Aorta (tissue), 5 donors: ENCODE measurements at regions of chr6 and their contacts with region 1.

Region 1: DNA sequence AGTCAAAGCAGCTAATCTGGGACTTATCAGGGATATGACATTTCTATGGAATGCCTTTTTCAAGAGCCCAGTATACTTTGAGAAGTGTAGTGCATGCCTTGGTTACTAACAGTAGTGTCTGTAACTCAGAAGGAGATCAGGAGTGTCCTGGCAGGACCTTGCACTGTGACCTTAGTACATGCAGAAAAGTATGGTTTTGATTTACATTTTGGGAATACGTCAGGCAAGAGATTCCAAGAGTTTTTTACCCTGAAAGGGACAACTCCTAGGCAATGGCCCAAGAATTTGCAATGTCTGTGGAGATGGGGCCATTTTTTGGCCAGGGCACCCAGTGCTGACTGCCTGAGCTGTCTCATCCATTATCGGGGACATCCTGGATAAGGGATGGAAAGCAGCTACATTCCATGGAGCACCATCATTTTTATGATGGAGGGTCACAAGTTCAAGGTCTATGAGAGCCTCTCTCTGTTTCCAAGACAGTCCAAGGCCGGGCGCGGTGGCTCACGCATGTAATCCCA is 80.2 kb downstream of the FAM50B start:
- DNase-seq: peak; percentile 61 to 85
- ATAC-seq: peak; percentile 60
- H3K4me3 ChIP-seq: no peak overlapping the region
- H3K27ac ChIP-seq: peak overlapping the region; percentile 3 to 9
- H3K4me1 ChIP-seq: no peaks in the 10 kb centered on the region
- H3K27me3 ChIP-seq: no peaks in the 10 kb centered on the region

Region 2: DNA sequence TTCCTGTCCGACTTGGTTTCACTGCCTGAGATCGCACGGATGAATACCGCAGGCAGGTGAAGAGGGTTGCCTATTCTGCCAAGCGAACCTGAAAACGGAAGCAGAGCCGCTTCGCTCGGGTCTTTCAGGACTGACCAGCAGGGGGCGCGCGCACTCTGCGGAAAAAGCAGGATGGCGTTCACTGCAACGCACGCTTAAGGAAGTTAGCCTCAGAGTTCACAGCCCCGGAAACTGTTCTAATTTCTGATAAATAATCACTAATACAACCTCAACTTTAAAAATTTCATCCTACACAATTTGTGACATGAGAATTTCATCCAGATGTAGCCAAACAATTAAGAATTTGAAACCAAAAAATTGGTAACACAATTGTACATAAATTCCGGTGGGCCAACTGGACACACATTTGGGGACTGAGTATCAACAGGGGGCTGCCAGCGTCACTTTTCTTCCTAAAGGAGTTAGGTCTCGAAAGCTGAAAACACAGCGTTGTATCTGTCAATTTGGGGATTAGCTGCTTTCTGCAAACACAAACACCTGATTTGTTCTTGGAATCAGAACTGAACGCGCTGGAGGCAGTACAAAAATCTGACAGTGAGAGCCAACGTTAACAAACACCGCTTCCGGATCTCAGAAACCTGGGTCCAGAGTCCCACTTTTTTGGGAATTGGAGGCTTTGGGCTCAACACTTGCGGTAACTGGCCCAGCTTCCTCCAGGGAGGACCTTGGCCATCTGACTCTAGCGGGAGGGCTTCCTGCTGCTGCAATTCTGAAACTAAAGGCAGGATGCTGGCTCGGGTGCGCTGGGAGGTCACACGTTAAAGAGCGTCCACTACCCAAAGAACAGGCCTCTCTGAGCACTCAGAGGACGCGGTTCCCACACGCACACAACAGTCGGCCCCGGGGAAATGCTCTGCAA is 186.7 kb before region 1 on chr6:
- intact Hi-C with region 1: loop called (anchors 5 kb)
- DNase-seq: peak; percentile 89 to 97
- ATAC-seq: peak; percentile 86
- H3K4me3 ChIP-seq: peak overlapping the region in 1 of 2 donors; percentile 23
- H3K27ac ChIP-seq: peak overlapping the region in 1 of 2 donors; percentile 97
- H3K4me1 ChIP-seq: no peaks in the 10 kb centered on the region
- H3K27me3 ChIP-seq: no peaks in the 10 kb centered on the region

Region 3: DNA sequence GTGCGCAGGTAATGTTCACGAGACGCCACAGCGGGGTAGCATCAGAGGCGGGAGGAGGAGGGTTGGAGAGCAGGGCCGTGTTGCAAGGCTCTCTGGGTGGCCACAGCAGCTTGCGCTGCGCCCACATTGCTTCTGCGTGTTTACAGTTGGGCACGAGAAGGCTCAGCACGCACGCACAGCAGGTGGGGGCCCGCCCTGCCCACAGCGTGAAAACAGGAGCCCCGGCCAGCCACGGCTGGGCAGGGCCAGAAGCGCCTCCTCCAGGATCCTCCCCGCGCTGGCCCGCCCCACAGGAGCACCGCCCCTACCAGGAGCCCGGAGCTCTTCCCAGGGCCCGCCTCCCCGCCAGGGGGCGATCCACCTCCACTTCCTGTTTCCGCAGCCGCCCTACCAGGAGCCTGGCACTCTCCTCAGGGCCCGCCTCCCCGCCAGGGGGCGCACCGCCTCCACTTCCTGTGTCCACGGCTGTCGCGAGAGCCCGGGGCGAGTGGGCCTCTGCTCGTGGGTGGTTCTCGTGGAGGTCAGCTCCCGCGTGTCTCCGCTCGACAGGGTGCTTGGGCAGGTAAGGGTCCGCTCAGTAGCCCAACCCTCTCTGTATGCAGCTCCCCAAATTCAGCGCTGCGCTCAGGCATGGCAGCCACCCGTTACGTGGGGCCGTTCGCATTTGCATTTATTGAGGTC is 80.3 kb before region 1 on chr6 and contains the start of gene FAM50B:
- intact Hi-C with region 1: loop called (anchors 5 kb)
- DNase-seq: peak; percentile 95 to 98
- ATAC-seq: peak; percentile 98
- H3K4me3 ChIP-seq: peak within 1 kb of the TSS in 1 of 2 donors; percentile 9
- H3K27ac ChIP-seq: peak within 1 kb of the TSS in 1 of 2 donors; percentile 55
- H3K4me1 ChIP-seq: peaks cover 0 to 4% of the 10 kb centered on the region in 2 donors
- H3K27me3 ChIP-seq: no peaks in the 10 kb centered on the region
- total RNA-seq, gene FAM50B: 7.8 to 9.1 TPM

Region 4: DNA sequence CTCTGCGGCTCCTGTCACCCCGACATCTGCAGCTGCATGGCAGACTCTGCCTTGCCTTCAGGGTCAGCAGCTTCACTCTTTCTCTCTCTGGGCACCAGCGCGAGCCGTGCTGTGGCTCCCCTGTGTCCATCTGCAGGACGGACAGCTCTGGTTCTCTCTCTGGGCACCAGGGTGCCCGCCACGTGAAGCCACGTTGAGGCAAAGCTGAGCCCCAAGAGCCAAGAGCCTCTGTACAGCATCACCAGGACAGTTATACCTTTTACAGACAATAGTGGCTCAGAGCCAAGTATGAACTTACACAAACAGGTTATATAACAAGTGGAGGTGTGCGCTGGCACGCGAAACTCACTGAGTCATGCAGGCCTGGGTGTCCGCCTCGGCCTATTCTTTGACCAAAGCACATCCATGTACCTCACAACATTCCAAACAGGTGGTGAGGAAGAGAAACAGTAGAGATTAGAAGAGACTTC is 29.3 kb before region 1 on chr6:
- intact Hi-C with region 1: loop called in 1 of 2 experiments (anchors 5 kb)
- DNase-seq: no peak
- ATAC-seq: no peak
- H3K4me3 ChIP-seq: no peak overlapping the region
- H3K27ac ChIP-seq: no peak overlapping the region
- H3K4me1 ChIP-seq: peaks cover 2 to 4% of the 10 kb centered on the region in 2 donors
- H3K27me3 ChIP-seq: no peaks in the 10 kb centered on the region

Region 5: GRCh38 chr6:3977875-3978711 is 48.8 kb after region 1 on chr6:
- intact Hi-C with region 1: loop called in 1 of 2 experiments (anchors 5 kb)
- DNase-seq: no peak
- ATAC-seq: peak; percentile 83
- H3K4me3 ChIP-seq: no peak overlapping the region
- H3K27ac ChIP-seq: no peak overlapping the region
- H3K4me1 ChIP-seq: no peaks in the 10 kb centered on the region
- H3K27me3 ChIP-seq: no peaks in the 10 kb centered on the region